Endothelial cell of umbilical vein (primary cell): ENCODE measurements at regions of chr1 and their contacts with region 1.

Region 1: GRCh38 chr1:227999056-227999930 is 7.5 kb upstream of the WNT3A start:
- DNase-seq: peak; percentile 71
- H3K4me3 ChIP-seq: no peak overlapping the region
- H3K27ac ChIP-seq: no peak overlapping the region
- H3K4me1 ChIP-seq: no peaks in the 10 kb centered on the region
- H3K27me3 ChIP-seq: peaks cover 0 to 4% of the 10 kb centered on the region in 2 experiments
- CTCF ChIP-seq: peak; percentile 75 to 92
- POLR2A ChIP-seq: no peak

Region 2: DNA sequence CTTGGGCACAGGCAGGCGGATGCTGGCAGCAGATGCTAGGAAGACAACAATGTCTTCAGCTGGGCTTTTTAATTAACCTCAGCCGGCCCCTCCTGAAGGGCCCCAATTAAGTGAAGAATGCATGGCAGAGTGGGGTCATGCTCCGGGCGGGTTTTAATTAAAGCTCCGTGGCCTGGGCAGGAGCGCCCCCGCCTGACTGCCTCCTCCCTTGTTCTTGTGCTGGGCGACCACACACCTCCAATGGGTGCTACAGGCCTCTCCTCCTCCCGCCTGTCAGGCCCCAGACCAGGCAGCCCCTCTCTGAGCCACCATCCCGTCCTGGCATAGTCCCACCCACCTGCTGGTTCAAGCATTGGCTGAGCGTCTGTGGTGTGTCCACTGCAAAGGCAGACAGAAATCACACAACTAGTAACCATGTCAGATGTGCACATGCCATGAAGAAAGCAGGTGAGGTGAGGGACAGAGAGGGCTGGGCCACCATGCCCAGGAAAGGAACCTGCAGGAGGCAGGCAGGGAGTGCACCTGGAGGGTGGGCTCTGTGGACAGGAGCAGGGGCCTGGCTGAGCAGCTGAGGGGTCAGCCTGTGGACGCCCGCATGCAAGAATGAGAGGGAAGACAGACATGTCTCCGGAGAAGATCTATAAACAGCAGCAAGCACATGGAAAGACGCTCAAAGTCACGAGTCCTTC is 74.7 kb after region 1 on chr1:
- CTCF ChIA-PET with region 1: interaction called, 24 read pairs
- POLR2A ChIA-PET with region 1: interaction called, 3 read pairs
- dilution Hi-C with region 1: no loop called
- intact Hi-C with region 1: loop called (anchors 5 kb)
- DNase-seq: no peak
- H3K4me3 ChIP-seq: no peak overlapping the region
- H3K27ac ChIP-seq: no peak overlapping the region
- H3K4me1 ChIP-seq: no peaks in the 10 kb centered on the region
- H3K27me3 ChIP-seq: peaks cover 0 to 2% of the 10 kb centered on the region in 2 experiments
- CTCF ChIP-seq: peak in 1 of 2 donors; percentile 14
- POLR2A ChIP-seq: no peak

Region 3: GRCh38 chr1:228102791-228103620 is 103.7 kb after region 1 on chr1 and contains the start of gene C1orf35:
- CTCF ChIA-PET with region 1: interaction called, 12 read pairs
- POLR2A ChIA-PET with region 1: no interaction called
- dilution Hi-C with region 1: no loop called
- intact Hi-C with region 1: loop called (anchors 1 kb)
- DNase-seq: peak; percentile 95
- H3K4me3 ChIP-seq: peak within 1 kb of the TSS; percentile 53 to 57 (median 53)
- H3K27ac ChIP-seq: peak within 1 kb of the TSS; percentile 5
- H3K4me1 ChIP-seq: peaks cover 10% of the 10 kb centered on the region
- H3K27me3 ChIP-seq: no peaks in the 10 kb centered on the region
- CTCF ChIP-seq: no peak
- POLR2A ChIP-seq: no peak
- total RNA-seq, gene C1orf35: 21.7 and 23.9 TPM in 2 replicates

Region 4: DNA sequence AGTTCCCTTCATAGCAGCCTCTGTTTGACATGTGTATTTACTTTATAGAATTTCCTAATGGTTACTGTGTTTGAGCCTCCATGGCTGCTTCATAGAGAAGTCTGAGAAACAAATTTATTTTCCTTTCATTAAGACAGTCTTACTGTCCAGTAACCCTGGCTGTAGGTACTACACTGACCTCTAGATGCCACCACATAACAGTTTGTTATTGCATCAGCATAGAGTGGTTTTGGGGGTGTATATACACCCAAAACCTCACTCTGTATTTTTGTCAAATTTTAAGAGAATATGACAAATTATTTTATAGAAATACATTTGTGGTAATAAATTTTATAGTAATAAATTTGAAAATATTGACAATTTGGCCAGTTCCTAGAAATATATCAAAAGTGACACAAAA is 265.9 kb after region 1 on chr1:
- CTCF ChIA-PET with region 1: interaction called, 6 read pairs
- POLR2A ChIA-PET with region 1: no interaction called
- dilution Hi-C with region 1: no loop called
- intact Hi-C with region 1: loop called (anchors 1 kb)
- DNase-seq: peak; percentile 36
- H3K4me3 ChIP-seq: no peak overlapping the region
- H3K27ac ChIP-seq: no peak overlapping the region
- H3K4me1 ChIP-seq: peaks cover under 1% of the 10 kb centered on the region
- H3K27me3 ChIP-seq: no peaks in the 10 kb centered on the region
- CTCF ChIP-seq: peak; percentile 13 to 21
- POLR2A ChIP-seq: no peak

Region 5: GRCh38 chr1:228332797-228333738 is 333.8 kb after region 1 on chr1:
- CTCF ChIA-PET with region 1: no interaction called
- POLR2A ChIA-PET with region 1: no interaction called
- dilution Hi-C with region 1: no loop called
- intact Hi-C with region 1: no loop called
- DNase-seq: no peak
- H3K4me3 ChIP-seq: no peak overlapping the region
- H3K27ac ChIP-seq: no peak overlapping the region
- H3K4me1 ChIP-seq: no peaks in the 10 kb centered on the region
- H3K27me3 ChIP-seq: no peaks in the 10 kb centered on the region
- CTCF ChIP-seq: no peak
- POLR2A ChIP-seq: no peak

Region 6: DNA sequence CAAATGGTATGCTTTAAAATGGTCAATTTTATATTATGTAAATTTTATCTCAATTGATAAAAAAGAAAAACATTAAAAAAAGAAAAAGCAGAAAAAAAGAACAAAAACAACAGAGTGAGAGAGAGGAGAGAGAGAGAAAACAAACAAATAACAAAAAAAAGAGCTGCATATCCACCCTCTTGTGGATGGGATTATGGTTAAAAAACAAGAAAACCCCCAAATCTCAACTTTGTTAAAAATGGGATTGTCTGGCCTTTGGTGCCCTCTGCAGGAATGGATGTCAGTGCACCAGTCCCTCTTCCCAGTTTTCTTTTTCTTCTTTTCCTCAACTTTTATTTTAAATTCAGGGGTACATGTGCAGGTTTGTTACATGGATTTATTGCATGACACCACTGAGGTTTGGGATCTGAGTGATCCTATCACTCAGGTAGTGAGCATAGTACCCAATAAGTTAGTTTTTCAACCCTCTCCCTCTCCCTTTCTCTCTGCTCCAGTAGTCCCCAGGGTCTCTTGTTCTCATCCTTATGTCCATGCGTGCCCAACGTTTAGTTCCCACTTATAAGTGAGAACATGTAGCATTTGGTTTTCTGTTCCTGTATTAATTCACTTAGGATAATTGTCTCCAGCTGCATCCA is 516.0 kb after region 1 on chr1:
- CTCF ChIA-PET with region 1: interaction called, 12 read pairs
- POLR2A ChIA-PET with region 1: no interaction called
- dilution Hi-C with region 1: no loop called
- intact Hi-C with region 1: loop called (anchors 1 kb)
- DNase-seq: peak; percentile 60
- H3K4me3 ChIP-seq: no peak overlapping the region
- H3K27ac ChIP-seq: no peak overlapping the region
- H3K4me1 ChIP-seq: no peaks in the 10 kb centered on the region
- H3K27me3 ChIP-seq: peaks cover 21 to 22% of the 10 kb centered on the region in 2 experiments
- CTCF ChIP-seq: peak; percentile 56 to 58
- POLR2A ChIP-seq: no peak